Posterior vena cava (tissue), 2 donors: ENCODE measurements at regions of chr3 and their contacts with region 1.

Region 1: DNA sequence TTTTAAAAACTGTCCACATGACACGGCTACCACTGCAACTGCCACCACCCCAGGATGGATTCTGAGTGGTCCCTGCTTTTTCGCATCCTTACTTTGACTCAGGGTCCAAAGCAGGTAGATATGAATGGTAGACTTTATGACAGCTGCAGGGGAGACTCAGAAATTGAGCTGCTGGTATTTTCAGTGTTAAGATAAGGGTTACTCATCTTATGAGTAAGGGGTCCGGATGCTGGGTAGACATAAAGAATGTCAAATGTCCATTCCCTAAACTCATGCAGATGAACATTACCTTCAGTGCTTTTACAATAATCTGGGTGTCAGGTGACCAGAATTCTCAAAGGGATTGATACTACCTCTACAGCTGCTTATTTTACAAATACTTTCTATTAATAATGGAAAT is 25.9 kb upstream of the BBX start:
- DNase-seq: no peak

Region 2: DNA sequence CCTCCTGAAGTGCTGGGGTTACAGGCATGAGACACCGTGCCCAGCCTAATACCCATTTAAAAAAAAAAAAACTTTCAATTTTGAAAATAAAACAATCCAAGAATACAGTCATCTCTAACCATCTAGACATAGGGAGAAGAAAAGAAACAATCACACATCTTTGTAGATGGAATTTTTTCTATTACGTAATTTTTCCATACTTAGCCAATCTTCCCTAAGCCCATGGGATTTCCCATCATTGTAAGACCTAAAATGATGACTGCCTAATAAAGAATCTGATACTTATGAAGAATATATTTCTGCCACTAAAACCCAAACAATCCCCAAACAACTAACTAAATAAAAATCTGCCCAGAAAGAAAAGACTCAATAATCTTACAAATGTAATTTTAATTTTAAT is 1716.7 kb before region 1 on chr3:
- intact Hi-C with region 1: no loop called
- DNase-seq: no peak

Region 3: DNA sequence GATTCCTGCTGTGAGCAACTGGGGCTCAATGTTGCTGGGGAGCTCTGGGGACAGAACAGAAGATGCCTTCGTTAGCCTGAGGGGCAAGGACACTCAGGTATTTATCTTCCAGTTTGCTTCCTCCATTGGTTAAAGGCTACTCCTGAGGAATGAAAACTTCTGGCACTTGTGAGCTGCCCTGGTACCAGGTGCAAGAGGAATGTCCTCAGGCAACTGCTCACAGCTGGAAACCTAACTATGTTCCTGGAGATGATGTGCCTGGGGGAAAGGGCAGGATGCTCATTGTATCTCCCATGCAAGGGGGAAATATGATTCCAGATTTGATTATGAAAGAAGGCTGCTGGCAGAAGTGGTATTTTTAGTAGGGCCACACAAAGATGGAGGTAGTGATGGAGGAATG is 28.1 kb before region 1 on chr3:
- intact Hi-C with region 1: loop called in 1 of 2 experiments (anchors 1 kb)
- DNase-seq: no peak

Region 4: DNA sequence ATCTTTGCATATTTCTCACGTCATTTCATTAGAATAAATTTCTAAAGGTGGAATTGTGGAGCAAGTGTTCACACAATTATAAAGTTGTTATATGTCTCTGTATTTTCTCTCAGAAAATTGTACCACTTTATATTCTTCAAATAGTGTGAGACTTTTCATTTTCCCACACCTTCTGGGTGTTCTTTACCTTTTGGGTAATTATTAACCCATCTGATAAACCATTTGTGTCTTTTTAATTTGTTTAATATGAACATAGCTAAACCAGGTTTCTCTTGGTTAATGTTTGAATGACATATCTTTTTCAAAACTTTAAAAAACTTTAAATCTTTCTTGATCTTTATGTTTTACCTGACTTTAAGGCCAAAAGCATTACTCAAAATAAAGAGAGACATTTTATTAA is 1133.1 kb after region 1 on chr3:
- intact Hi-C with region 1: no loop called
- DNase-seq: no peak